RWPE1 (cell line): ENCODE measurements at regions of chr3 and their contacts with region 1.

Region 1: GRCh38 chr3:12286927-12287726 is 1.7 kb upstream of the PPARG start:
- DNase-seq: no peak
- H3K27ac ChIP-seq: peak overlapping the region; percentile 44; the same call in 1 of the 2 replicates
- CTCF ChIP-seq: peak; percentile 20; the same call in 1 of the 2 replicates

Region 2: DNA sequence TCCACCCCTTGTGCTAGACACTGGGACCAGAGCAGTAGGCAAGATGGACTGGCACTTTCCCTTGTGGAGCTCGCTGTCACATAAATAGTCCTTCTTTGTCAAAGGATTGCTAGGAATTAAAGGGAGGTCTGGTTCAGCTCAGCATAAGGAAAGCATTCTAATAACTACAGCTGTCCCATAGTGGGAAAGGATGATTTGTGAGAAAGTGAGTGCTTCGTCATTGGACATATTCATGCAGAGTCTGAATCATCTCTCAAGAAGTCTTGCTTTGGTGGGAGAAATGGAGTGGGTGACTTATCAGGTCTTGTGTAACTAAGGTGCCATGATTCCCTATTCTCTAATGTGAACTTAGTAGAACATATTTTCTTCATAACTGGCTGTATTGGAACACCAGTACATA is 16.4 kb after region 1 on chr3:
- CTCF ChIA-PET with region 1: no interaction called
- POLR2A ChIA-PET with region 1: no interaction called
- DNase-seq: no peak
- H3K27ac ChIP-seq: no peak overlapping the region
- CTCF ChIP-seq: no peak

Region 3: GRCh38 chr3:12339701-12340480 is 52.8 kb after region 1 on chr3:
- CTCF ChIA-PET with region 1: no interaction called
- POLR2A ChIA-PET with region 1: interaction called, 10 read pairs
- DNase-seq: no peak
- H3K27ac ChIP-seq: no peak overlapping the region
- CTCF ChIP-seq: no peak

Region 4: DNA sequence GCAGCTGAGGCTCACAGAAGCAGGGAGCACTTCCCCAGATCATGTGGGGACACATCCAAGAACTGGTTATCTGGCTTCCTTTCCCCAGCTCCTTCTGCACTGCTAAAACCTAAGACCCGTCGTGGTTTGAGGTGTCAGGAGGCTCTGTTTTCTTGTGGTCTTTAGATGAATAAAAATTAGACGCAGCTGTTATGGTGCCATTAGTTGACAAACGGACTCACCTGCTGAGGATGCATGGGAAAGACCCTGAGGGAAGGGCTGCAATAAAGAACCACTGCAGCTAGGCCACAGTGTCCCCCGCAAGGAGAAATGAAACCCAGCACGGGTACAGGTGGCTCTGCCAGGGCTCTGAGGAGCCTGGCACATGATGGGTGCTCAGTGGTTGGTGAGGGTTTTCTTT is 686.7 kb after region 1 on chr3:
- CTCF ChIA-PET with region 1: no interaction called
- POLR2A ChIA-PET with region 1: no interaction called
- DNase-seq: no peak
- H3K27ac ChIP-seq: no peak overlapping the region
- CTCF ChIP-seq: no peak